ENCODE measurements at regions of chr11 and their contacts with region 1.

Region 1: DNA sequence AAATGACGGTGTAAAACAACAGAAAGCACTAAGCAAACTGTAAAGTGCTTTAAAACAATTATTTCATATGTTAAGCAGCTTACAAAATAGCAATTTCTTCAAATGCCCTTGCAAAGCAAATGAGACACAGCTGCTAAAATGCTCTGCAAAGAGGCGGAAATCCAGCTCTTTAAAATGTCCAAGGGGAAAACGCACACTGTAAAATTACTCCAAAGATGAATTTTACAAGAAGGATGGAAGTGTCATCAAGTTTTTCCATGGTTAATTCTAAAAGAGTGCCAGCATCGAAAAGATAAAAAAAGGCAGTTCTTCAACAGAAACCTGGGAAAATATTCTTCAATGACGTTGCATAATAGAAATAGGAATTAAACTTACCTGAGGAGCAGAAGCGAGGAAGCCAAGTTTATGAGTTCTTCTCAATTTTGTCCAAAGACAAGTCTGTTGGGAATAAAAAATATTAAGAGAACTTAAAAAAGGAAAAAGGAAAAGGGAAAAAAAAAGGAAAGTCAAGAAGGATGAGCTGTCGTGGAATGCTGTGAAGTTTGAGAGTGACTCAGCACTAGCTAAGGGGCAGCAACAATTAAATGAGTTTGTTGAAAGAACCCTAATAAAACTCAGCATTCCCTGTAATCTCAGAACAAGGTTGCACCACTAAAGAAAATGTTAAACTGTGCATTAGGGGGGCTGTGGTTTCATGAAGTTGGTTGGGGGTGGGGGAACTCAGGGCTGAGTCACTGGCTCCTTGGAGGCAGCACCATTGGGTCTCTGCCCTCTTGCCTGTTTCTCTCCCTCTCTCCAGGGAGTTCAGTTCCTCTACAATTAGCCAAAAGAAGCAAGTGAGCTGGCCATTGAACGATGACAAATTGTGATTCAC is 64.2 kb upstream of the BLID start:
- DNase-seq: peak; percentile 92
- ATAC-seq: peak; percentile 84
- H3K4me3 ChIP-seq: peak overlapping the region; percentile 10 to 35; a peak in 3 of 4 replicates
- H3K27ac ChIP-seq: peak overlapping the region; percentile 97
- H3K4me1 ChIP-seq: peaks cover 79 to 100% of the 10 kb centered on the region in 2 experiments
- H3K27me3 ChIP-seq: no peaks in the 10 kb centered on the region
- CTCF ChIP-seq: no peak
- POLR2A ChIP-seq: no peak
- RAD21 ChIP-seq: peak; percentile 47; the same call in 1 of the 2 replicates

Region 2: DNA sequence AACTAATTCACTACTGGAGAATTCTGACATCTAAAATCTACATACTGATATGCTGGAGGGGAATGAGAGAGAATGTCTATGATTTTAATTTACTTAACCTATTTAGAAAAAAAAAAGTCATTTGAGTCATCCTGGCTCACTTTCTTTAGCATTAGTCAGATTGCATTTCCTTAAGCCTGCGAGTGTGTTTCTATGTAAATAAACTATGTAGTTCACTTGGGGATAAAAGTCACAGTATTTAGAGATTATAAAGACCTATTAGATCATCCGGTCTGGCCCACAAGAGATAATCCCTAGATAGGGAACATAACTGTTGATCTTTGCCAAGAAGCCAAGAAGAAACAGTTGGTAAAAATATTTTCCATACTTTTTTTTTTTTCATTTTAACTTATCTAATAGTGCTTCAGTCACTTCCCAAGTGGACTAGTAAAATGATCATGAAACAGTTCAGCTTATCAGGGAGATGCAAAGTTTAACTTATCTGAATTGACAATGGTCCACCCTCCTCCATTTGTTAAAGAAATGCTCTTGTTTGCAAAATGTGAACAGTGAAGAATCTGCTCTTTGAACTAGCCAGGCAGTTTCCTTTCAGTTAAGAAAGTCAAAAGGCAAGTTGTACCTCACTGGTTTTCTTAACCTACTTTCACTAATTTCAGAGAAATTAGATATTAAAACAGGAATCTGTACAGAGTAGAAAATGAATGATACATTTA is 43.0 kb before region 1 on chr11:
- CTCF ChIA-PET with region 1: no interaction called
- POLR2A ChIA-PET with region 1: interaction called, 3 read pairs
- RAD21 ChIA-PET with region 1: no interaction called
- intact Hi-C with region 1: loop called (anchors 5 kb)
- DNase-seq: peak; percentile 79
- ATAC-seq: peak; percentile 37
- H3K4me3 ChIP-seq: no peak overlapping the region; a peak in 1 of 4 replicates
- H3K27ac ChIP-seq: peak overlapping the region; percentile 95
- H3K4me1 ChIP-seq: peaks cover 93 to 100% of the 10 kb centered on the region in 2 experiments
- H3K27me3 ChIP-seq: no peaks in the 10 kb centered on the region
- CTCF ChIP-seq: no peak
- POLR2A ChIP-seq: no peak
- RAD21 ChIP-seq: no peak; the same call in 1 of the 2 replicates

Region 3: DNA sequence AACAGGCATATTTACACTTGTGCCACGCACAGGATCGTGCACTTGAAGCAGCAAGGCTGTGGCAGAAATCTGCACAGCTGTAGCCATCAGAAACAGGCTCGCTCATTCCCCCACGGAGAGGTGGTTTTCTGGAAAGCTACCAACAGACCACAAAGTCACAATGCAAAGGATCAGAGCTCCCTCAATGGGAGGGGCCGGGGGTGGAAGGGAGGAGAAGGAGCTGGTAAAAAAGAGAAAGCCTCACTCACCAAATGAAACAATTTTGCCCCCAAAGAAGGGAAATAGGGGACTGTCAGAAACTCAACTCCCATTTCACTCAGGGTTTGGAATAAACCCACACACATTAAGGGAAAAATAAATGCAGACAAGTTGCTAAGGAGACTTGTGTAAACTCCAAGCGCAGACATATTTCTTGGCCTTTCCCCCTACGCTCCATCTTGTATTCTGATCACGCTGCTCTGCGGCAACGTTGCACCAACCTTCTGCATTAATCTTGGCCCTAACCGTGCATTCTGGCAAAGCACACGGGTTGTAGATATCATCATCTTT is 21.0 kb before region 1 on chr11:
- CTCF ChIA-PET with region 1: interaction called, 3 read pairs
- POLR2A ChIA-PET with region 1: interaction called, 30 read pairs
- RAD21 ChIA-PET with region 1: no interaction called
- intact Hi-C with region 1: no loop called
- DNase-seq: no peak
- ATAC-seq: peak; percentile 41
- H3K4me3 ChIP-seq: peak overlapping the region in 1 of 2 experiments; percentile 54
- H3K27ac ChIP-seq: peak overlapping the region; percentile 95
- H3K4me1 ChIP-seq: peaks cover 89 to 100% of the 10 kb centered on the region in 2 experiments
- H3K27me3 ChIP-seq: no peaks in the 10 kb centered on the region
- CTCF ChIP-seq: no peak
- POLR2A ChIP-seq: no peak
- RAD21 ChIP-seq: no peak; the same call in 1 of the 2 replicates

Region 4: DNA sequence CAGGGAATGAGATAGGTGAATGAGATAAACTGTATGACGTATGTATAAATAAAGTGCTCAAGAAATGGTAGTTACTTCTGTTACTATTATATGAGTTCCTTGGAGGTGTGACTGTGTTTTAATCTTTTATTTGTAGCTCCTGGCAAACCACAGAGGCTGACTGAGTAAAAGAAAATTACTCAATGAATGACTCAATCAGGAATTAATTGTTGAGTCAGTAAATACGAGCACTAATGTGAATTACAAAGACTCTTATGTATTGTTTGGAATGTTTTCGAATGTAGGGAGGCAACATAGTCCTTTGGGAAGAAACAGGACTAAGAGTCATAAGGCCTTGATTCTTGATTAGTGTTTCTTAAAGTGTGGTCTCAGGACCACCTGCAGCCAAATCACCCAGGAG is 13.1 kb before region 1 on chr11:
- CTCF ChIA-PET with region 1: no interaction called
- POLR2A ChIA-PET with region 1: interaction called, 30 read pairs
- RAD21 ChIA-PET with region 1: interaction called in 1 of 2 experiments, 4 read pairs
- intact Hi-C with region 1: no loop called
- DNase-seq: peak; percentile 87
- ATAC-seq: peak; percentile 63
- H3K4me3 ChIP-seq: no peak overlapping the region
- H3K27ac ChIP-seq: peak overlapping the region; percentile 95
- H3K4me1 ChIP-seq: peaks cover 93 to 96% of the 10 kb centered on the region in 2 experiments
- H3K27me3 ChIP-seq: no peaks in the 10 kb centered on the region
- CTCF ChIP-seq: no peak
- POLR2A ChIP-seq: no peak
- RAD21 ChIP-seq: peak; percentile 33; the same call in 1 of the 2 replicates

Region 5: GRCh38 chr11:122197055-122197987 is 17.1 kb after region 1 on chr11:
- CTCF ChIA-PET with region 1: interaction called, 10 read pairs
- POLR2A ChIA-PET with region 1: interaction called, 20 read pairs
- RAD21 ChIA-PET with region 1: interaction called in 1 of 2 experiments, 3 read pairs
- intact Hi-C with region 1: no loop called
- DNase-seq: peak; percentile 99
- ATAC-seq: peak; percentile 74
- H3K4me3 ChIP-seq: peak overlapping the region in 1 of 2 experiments; percentile 16; a peak in 1 of 4 replicates
- H3K27ac ChIP-seq: peak overlapping the region; percentile 97
- H3K4me1 ChIP-seq: peaks cover 76 to 95% of the 10 kb centered on the region in 2 experiments
- H3K27me3 ChIP-seq: no peaks in the 10 kb centered on the region
- CTCF ChIP-seq: no peak
- POLR2A ChIP-seq: peak; percentile 54
- RAD21 ChIP-seq: no peak

Region 6: GRCh38 chr11:122235615-122236014 is 55.4 kb after region 1 on chr11:
- CTCF ChIA-PET with region 1: no interaction called
- POLR2A ChIA-PET with region 1: no interaction called
- RAD21 ChIA-PET with region 1: no interaction called
- intact Hi-C with region 1: no loop called
- DNase-seq: no peak
- ATAC-seq: no peak
- H3K4me3 ChIP-seq: no peak overlapping the region
- H3K27ac ChIP-seq: no peak overlapping the region
- H3K4me1 ChIP-seq: no peaks in the 10 kb centered on the region
- H3K27me3 ChIP-seq: no peaks in the 10 kb centered on the region
- CTCF ChIP-seq: no peak
- POLR2A ChIP-seq: no peak
- RAD21 ChIP-seq: no peak